ENCODE measurements at regions of chr16 and their contacts with region 1.

Region 1: DNA sequence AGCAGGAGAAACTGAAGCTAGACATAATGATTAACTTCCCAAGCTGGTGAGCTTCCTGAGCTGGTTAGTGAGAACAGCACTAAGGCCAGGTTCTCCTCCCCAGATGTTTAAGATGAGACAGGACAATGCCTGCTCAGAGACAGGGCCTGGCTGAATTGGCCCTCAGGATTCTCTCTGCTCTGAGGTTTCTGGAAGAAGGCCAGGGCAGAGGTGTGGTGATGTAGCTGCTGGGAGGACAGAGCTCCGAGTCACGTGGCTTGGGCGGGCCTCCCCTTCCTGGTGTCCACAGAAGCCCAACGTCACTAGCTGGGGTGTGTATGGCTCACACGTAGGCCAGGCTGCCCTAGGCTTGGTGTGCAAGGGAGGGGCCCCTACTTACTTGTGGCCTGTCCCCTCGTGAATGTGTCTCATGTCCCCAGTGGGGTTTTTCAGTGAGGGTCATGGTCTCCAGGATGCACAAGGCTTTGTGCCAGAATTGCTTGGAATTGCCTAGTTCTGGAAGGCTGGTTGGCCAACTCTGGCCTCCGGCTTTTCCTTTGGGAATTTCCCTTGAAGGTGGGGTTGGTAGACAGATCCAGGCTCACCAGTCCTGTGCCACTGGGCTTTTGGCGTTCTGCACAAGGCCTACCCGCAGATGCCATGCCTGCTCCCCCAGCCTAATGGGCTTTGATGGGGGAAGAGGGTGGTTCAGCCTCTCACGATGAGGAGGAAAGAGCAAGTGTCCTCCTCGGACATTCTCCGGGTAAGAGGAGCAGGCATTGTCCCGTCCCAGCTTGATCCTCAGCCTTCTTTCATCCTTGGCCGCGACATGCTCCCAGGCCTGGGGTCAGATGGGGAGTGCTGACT is 3.4 kb downstream of the NOD2 start:
- DNase-seq: peak; percentile 81 to 90 (median 87)
- ATAC-seq: peak; percentile 72 to 92 (median 80)
- H3K4me3 ChIP-seq: peak overlapping the region in 1 of 12 donors; percentile 75
- H3K27ac ChIP-seq: peak overlapping the region; percentile 55 to 91 (median 72)
- H3K4me1 ChIP-seq: peaks cover 4 to 71% (median 29%) of the 10 kb centered on the region in 12 donors
- H3K27me3 ChIP-seq: peaks cover 0 to 4% (median 0%) of the 10 kb centered on the region in 9 donors
- CTCF ChIP-seq: no peak
- POLR2A ChIP-seq: peak in 1 of 2 donors; percentile 13

Region 2: GRCh38 chr16:50741808-50742575 is 45.2 kb after region 1 on chr16 and contains the start of gene CYLD:
- intact Hi-C with region 1: loop called in 6 of 10 experiments (anchors 5 to 10 kb)
- DNase-seq: peak; percentile 100
- ATAC-seq: peak; percentile 99 to 100 (median 99)
- H3K4me3 ChIP-seq: peak within 1 kb of the TSS; percentile 70 to 96 (median 92)
- H3K27ac ChIP-seq: peak within 1 kb of the TSS in 11 of 12 donors; percentile 76 to 97 (median 87)
- H3K4me1 ChIP-seq: peaks cover 3 to 45% (median 15%) of the 10 kb centered on the region in 12 donors
- H3K27me3 ChIP-seq: no peaks in the 10 kb centered on the region
- CTCF ChIP-seq: no peak
- POLR2A ChIP-seq: peak in 1 of 2 donors; percentile 43
- total RNA-seq, gene CYLD: 20.2 to 68.8 (median 40.0) TPM

Region 3: GRCh38 chr16:51155901-51156806 is 459.4 kb after region 1 on chr16:
- intact Hi-C with region 1: no loop called
- DNase-seq: no peak
- ATAC-seq: no peak
- H3K4me3 ChIP-seq: peak overlapping the region in 5 of 12 donors; percentile 10 to 32 (median 16)
- H3K27ac ChIP-seq: no peak overlapping the region
- H3K4me1 ChIP-seq: peaks cover 0 to 39% (median 11%) of the 10 kb centered on the region in 12 donors
- H3K27me3 ChIP-seq: peaks cover 33 to 98% (median 76%) of the 10 kb centered on the region in 9 donors
- CTCF ChIP-seq: no peak
- POLR2A ChIP-seq: no peak